ENCODE measurements at regions of chr12 and their contacts with region 1.

Region 1: GRCh38 chr12:122974274-122974891 is 661 bp upstream of the OGFOD2 start:
- DNase-seq: peak; percentile 98
- ATAC-seq: peak; percentile 79
- H3K4me3 ChIP-seq: peak overlapping the region; percentile 96
- H3K27ac ChIP-seq: peak overlapping the region; percentile 83
- H3K4me1 ChIP-seq: peaks cover 13% of the 10 kb centered on the region
- H3K27me3 ChIP-seq: no peaks in the 10 kb centered on the region
- CTCF ChIP-seq: no peak

Region 2: DNA sequence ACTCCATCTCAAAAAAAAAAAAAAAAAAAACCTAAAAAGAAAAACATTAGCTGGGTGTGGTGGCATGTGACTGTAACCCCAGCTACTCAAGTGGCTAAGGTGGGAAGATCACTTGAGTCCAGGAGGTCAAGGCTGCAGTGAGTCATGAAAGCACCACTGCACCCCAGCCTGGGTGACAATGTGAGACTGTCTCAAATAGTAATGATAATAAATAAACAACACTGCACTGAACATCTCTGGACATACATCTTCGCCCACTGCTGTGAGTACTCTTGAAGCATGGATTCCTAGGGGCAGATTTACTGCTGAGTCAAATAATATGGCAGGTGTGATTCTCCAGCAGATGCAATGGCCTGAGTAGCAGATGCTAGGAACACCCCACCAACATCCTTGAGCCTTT is 31.8 kb before region 1 on chr12:
- CTCF ChIA-PET with region 1: no interaction called
- POLR2A ChIA-PET with region 1: no interaction called
- intact Hi-C with region 1: no loop called
- DNase-seq: no peak
- ATAC-seq: no peak
- H3K4me3 ChIP-seq: no peak overlapping the region
- H3K27ac ChIP-seq: peak overlapping the region; percentile 98
- H3K4me1 ChIP-seq: peaks cover 61% of the 10 kb centered on the region
- H3K27me3 ChIP-seq: no peaks in the 10 kb centered on the region
- CTCF ChIP-seq: no peak

Region 3: GRCh38 chr12:123099560-123100192 is 125.3 kb after region 1 on chr12:
- CTCF ChIA-PET with region 1: no interaction called
- POLR2A ChIA-PET with region 1: no interaction called
- intact Hi-C with region 1: no loop called
- DNase-seq: no peak
- ATAC-seq: no peak
- H3K4me3 ChIP-seq: no peak overlapping the region
- H3K27ac ChIP-seq: no peak overlapping the region
- H3K4me1 ChIP-seq: peaks cover 33% of the 10 kb centered on the region
- H3K27me3 ChIP-seq: no peaks in the 10 kb centered on the region
- CTCF ChIP-seq: no peak

Region 4: DNA sequence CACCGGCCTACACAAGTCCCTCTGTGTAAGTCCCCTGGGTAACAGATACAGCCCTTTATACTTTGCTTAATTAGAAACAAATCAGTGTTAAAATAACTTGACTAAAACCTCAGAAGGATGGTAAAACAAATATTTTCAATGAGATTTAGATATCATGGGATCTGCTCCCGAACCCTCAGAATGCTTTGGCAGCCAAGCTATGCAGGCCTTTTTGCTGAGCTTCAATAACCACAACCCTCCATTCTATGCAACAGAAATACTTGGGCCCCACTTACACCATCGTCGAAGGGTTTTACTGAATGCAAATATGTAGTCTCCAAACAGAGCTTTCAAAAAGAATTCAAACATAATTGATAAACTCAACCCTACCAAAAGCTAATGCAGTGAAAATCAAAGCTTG is 205.8 kb after region 1 on chr12:
- CTCF ChIA-PET with region 1: no interaction called
- POLR2A ChIA-PET with region 1: interaction called, 12 read pairs
- intact Hi-C with region 1: no loop called
- DNase-seq: no peak
- ATAC-seq: no peak
- H3K4me3 ChIP-seq: no peak overlapping the region
- H3K27ac ChIP-seq: no peak overlapping the region
- H3K4me1 ChIP-seq: no peaks in the 10 kb centered on the region
- H3K27me3 ChIP-seq: no peaks in the 10 kb centered on the region
- CTCF ChIP-seq: no peak

Measured in PC-3 (cell line).